ENCODE measurements at regions of chr2 and their contacts with region 1.

Region 1: GRCh38 chr2:98465456-98466226 is 21.0 kb downstream of the INPP4A start:
- DNase-seq: peak; percentile 56 to 93
- ATAC-seq: peak; percentile 25 to 53 (median 46)
- H3K4me3 ChIP-seq: peak overlapping the region; percentile 8
- H3K4me3 Mint-ChIP-seq: peak overlapping the region; percentile 94
- H3K27ac ChIP-seq: peak overlapping the region; percentile 95
- H3K27ac Mint-ChIP-seq: peak overlapping the region; percentile 98 to 99
- H3K4me1 ChIP-seq: peaks cover 99% of the 10 kb centered on the region
- H3K4me1 Mint-ChIP-seq: peaks cover 75 to 88% of the 10 kb centered on the region in 2 donors
- H3K27me3 ChIP-seq: no peaks in the 10 kb centered on the region
- H3K27me3 Mint-ChIP-seq: no peaks in the 10 kb centered on the region
- CTCF ChIP-seq: no peak

Region 2: GRCh38 chr2:97718051-97718882 is 747.4 kb before region 1 on chr2:
- intact Hi-C with region 1: loop called (anchors 10 kb)
- DNase-seq: peak; percentile 72 to 88
- ATAC-seq: peak; percentile 65 to 76 (median 76)
- H3K4me3 ChIP-seq: peak overlapping the region; percentile 69
- H3K4me3 Mint-ChIP-seq: peak overlapping the region; percentile 94
- H3K27ac ChIP-seq: peak overlapping the region; percentile 71
- H3K27ac Mint-ChIP-seq: peak overlapping the region; percentile 97
- H3K4me1 ChIP-seq: peaks cover 87% of the 10 kb centered on the region
- H3K4me1 Mint-ChIP-seq: peaks cover 89 to 91% of the 10 kb centered on the region in 2 donors
- H3K27me3 ChIP-seq: no peaks in the 10 kb centered on the region
- H3K27me3 Mint-ChIP-seq: no peaks in the 10 kb centered on the region
- CTCF ChIP-seq: no peak

Region 3: GRCh38 chr2:98444436-98445176 is 21.0 kb before region 1 on chr2 and contains the start of gene INPP4A:
- intact Hi-C with region 1: loop called (anchors 2 kb)
- DNase-seq: peak; percentile 73 to 89
- ATAC-seq: peak; percentile 65 to 87 (median 80)
- H3K4me3 ChIP-seq: peak within 1 kb of the TSS; percentile 64
- H3K4me3 Mint-ChIP-seq: peak within 1 kb of the TSS; percentile 98
- H3K27ac ChIP-seq: peak within 1 kb of the TSS; percentile 78
- H3K27ac Mint-ChIP-seq: peak within 1 kb of the TSS; percentile 98 to 99
- H3K4me1 ChIP-seq: peaks cover 38% of the 10 kb centered on the region
- H3K4me1 Mint-ChIP-seq: peaks cover 47 to 51% of the 10 kb centered on the region in 2 donors
- H3K27me3 ChIP-seq: no peaks in the 10 kb centered on the region
- H3K27me3 Mint-ChIP-seq: no peaks in the 10 kb centered on the region
- CTCF ChIP-seq: no peak
- total RNA-seq, gene INPP4A: 192 to 243 (median 225) TPM

Region 4: DNA sequence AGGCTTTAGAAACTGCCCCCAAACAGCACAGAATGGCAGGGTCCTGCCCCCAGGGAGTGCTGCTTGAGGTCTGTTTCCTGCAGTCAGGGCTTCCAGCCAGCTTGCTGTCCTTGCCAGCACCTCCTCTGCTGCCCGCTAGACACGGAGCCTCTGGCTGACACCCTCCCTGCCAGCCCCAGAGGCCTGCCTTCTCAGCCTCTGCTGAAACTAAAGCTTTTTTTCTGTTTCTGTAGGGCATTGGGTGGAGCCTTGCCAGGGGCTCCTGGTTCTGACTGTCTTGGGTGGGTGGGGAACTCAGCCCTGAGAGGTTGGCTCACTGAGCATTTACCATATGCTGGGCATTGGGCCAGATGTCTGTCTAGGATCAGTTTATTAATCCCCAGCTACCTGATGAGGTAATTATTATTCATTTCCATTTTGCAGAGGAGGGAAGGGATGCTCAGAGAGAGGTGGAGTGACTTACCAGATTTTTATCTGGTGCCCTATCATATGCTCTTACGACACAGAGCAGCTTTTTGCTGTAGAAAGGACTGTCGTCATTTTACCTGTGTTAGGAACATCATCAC is 14.4 kb after region 1 on chr2:
- intact Hi-C with region 1: loop called (anchors 2 kb)
- DNase-seq: peak in 1 of 2 donors; percentile 57
- ATAC-seq: peak; percentile 73 to 79 (median 73)
- H3K4me3 ChIP-seq: no peak overlapping the region
- H3K4me3 Mint-ChIP-seq: peak overlapping the region; percentile 82
- H3K27ac ChIP-seq: peak overlapping the region; percentile 52
- H3K27ac Mint-ChIP-seq: peak overlapping the region; percentile 98 to 99
- H3K4me1 ChIP-seq: peaks cover 92% of the 10 kb centered on the region
- H3K4me1 Mint-ChIP-seq: peaks cover 95 to 99% of the 10 kb centered on the region in 2 donors
- H3K27me3 ChIP-seq: no peaks in the 10 kb centered on the region
- H3K27me3 Mint-ChIP-seq: no peaks in the 10 kb centered on the region
- CTCF ChIP-seq: no peak

Region 5: GRCh38 chr2:98654699-98655495 is 189.3 kb after region 1 on chr2:
- intact Hi-C with region 1: loop called (anchors 5 kb)
- DNase-seq: peak in 1 of 2 donors; percentile 83
- ATAC-seq: peak; percentile 36 to 65 (median 38)
- H3K4me3 ChIP-seq: no peak overlapping the region
- H3K4me3 Mint-ChIP-seq: peak overlapping the region; percentile 83
- H3K27ac ChIP-seq: peak overlapping the region; percentile 83
- H3K27ac Mint-ChIP-seq: peak overlapping the region; percentile 83 to 90
- H3K4me1 ChIP-seq: peaks cover 31% of the 10 kb centered on the region
- H3K4me1 Mint-ChIP-seq: peaks cover 78 to 85% of the 10 kb centered on the region in 2 donors
- H3K27me3 ChIP-seq: no peaks in the 10 kb centered on the region
- H3K27me3 Mint-ChIP-seq: no peaks in the 10 kb centered on the region
- CTCF ChIP-seq: no peak